ENCODE measurements at regions of chr21 and their contacts with region 1.

Region 1: DNA sequence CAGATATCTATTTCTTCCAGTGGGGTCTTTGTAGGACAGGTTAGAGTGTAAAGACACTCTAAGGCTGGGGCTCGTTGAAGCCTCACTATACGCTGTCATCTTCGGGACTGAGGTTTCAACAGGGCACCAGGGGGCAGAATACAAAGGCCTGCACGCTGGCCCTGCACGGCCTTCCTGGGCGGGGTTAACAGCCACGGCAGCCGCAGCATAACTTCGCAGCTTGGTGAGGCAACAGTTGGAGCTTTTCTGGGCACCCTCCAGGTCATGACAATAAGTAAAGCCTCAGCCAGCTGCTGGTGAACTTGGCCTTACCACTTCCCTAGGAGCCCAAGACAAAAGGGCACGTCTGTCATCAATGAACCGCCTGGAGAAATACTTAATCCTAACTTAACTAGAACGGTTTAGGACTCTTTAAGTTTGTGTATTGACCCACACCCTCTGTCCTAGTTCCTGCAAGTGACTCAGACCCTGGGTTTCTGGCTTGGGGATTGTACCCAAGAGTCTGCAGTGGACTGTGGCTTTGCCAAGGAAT is 2.3 kb upstream of the RUNX1 start:
- DNase-seq: peak; percentile 92
- ATAC-seq: peak; percentile 44
- H3K4me3 Mint-ChIP-seq: peak overlapping the region; percentile 24
- H3K27ac Mint-ChIP-seq: peak overlapping the region; percentile 97
- H3K4me1 Mint-ChIP-seq: peaks cover 57% of the 10 kb centered on the region
- H3K27me3 Mint-ChIP-seq: no peaks in the 10 kb centered on the region
- CTCF ChIP-seq: peak; percentile 64

Region 2: GRCh38 chr21:34888569-34889319 is 162.6 kb before region 1 on chr21:
- CTCF ChIA-PET with region 1: interaction called, 89 read pairs
- POLR2A ChIA-PET with region 1: interaction called, 136 read pairs
- intact Hi-C with region 1: loop called (anchors 1 kb)
- DNase-seq: peak; percentile 87
- ATAC-seq: peak; percentile 50
- H3K4me3 Mint-ChIP-seq: peak overlapping the region; percentile 93
- H3K27ac Mint-ChIP-seq: peak overlapping the region; percentile 98
- H3K4me1 Mint-ChIP-seq: peaks cover 42% of the 10 kb centered on the region
- H3K27me3 Mint-ChIP-seq: peaks cover 1% of the 10 kb centered on the region
- CTCF ChIP-seq: no peak

Region 3: GRCh38 chr21:34967509-34968289 is 83.7 kb before region 1 on chr21:
- CTCF ChIA-PET with region 1: interaction called, 4 read pairs
- POLR2A ChIA-PET with region 1: interaction called, 24 read pairs
- intact Hi-C with region 1: loop called (anchors 5 kb)
- DNase-seq: peak; percentile 75
- ATAC-seq: peak; percentile 74
- H3K4me3 Mint-ChIP-seq: peak overlapping the region; percentile 29
- H3K27ac Mint-ChIP-seq: peak overlapping the region; percentile 89
- H3K4me1 Mint-ChIP-seq: peaks cover 87% of the 10 kb centered on the region
- H3K27me3 Mint-ChIP-seq: peaks cover 3% of the 10 kb centered on the region
- CTCF ChIP-seq: no peak

Region 4: DNA sequence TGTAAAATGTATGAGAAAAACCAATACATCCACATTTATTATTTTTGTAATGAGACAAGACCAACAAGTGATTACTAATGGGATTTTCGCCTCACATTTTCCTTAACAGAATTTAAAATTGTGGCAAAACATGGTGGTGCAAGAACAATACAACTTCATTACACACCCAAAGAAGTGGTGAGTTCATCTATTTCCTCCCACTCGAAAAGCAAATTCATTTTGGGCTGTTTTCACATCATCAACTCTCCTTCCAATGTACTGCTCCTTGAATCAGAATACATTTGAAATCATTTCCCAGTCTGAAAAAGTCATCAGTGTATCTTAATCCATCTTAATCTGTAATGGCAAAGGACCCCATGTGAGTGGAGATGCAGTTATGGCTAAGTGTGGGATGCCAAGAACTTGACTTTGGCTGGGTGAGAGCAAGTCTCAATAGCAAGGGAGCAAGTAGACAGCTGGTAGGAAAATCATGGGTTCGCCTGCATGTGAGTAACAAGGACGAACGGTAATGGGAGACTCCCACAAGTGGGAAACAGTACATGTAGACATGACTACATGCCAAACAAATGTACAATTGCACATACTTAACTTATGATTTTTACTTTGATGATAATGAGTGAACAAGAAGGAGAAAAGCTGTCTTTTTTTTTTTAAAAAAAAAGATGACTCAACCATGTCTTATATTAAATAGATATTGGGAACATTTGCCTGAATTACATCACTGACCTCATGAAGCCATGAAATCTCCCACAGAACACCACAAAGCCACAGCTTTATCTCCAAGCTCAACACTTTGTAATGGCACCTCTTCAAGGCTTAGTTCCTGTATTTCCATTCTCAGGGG is 48.3 kb before region 1 on chr21:
- CTCF ChIA-PET with region 1: interaction called, 5 read pairs
- POLR2A ChIA-PET with region 1: interaction called, 10 read pairs
- intact Hi-C with region 1: no loop called
- DNase-seq: no peak
- ATAC-seq: no peak
- H3K4me3 Mint-ChIP-seq: no peak overlapping the region
- H3K27ac Mint-ChIP-seq: peak overlapping the region; percentile 17
- H3K4me1 Mint-ChIP-seq: peaks cover 86% of the 10 kb centered on the region
- H3K27me3 Mint-ChIP-seq: no peaks in the 10 kb centered on the region
- CTCF ChIP-seq: no peak

Region 5: GRCh38 chr21:35036465-35037383 is 14.6 kb before region 1 on chr21:
- CTCF ChIA-PET with region 1: interaction called, 3 read pairs
- POLR2A ChIA-PET with region 1: interaction called, 26 read pairs
- intact Hi-C with region 1: no loop called
- DNase-seq: peak; percentile 66
- ATAC-seq: peak; percentile 50
- H3K4me3 Mint-ChIP-seq: peak overlapping the region; percentile 63
- H3K27ac Mint-ChIP-seq: peak overlapping the region; percentile 90
- H3K4me1 Mint-ChIP-seq: peaks cover 96% of the 10 kb centered on the region
- H3K27me3 Mint-ChIP-seq: no peaks in the 10 kb centered on the region
- CTCF ChIP-seq: no peak

Region 6: GRCh38 chr21:35138665-35139381 is 87.5 kb after region 1 on chr21:
- CTCF ChIA-PET with region 1: interaction called, 13 read pairs
- POLR2A ChIA-PET with region 1: interaction called, 6 read pairs
- intact Hi-C with region 1: loop called (anchors 2 kb)
- DNase-seq: peak; percentile 94
- ATAC-seq: peak; percentile 95
- H3K4me3 Mint-ChIP-seq: peak overlapping the region; percentile 63
- H3K27ac Mint-ChIP-seq: peak overlapping the region; percentile 97
- H3K4me1 Mint-ChIP-seq: peaks cover 35% of the 10 kb centered on the region
- H3K27me3 Mint-ChIP-seq: no peaks in the 10 kb centered on the region
- CTCF ChIP-seq: no peak